ENCODE measurements at regions of chr16 and their contacts with region 1.

Region 1: DNA sequence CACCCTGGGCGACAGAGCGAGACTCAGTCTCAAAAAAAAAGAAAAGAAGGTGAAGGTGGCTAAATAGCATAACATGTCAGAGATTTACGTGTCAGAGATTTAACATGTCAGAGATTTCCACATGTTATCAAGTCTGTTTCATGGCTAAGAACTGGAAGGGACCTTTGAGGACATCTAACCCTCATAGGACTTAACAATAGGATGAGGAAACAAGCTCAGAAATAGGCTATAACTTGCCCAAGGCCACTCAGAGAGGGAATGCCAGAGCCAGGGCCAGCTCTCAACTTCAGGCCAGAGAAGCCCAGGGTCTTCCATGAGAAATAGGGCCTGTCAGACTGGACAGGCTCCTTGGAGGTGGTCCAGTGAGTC is 26.8 kb upstream of the ZNF629 start:
- DNase-seq: peak in 1 of 3 donors; percentile 6
- H3K4me3 ChIP-seq: peak overlapping the region; percentile 13 to 79 (median 61)
- H3K27ac ChIP-seq: peak overlapping the region; percentile 30 to 81
- H3K4me1 ChIP-seq: peaks cover 0 to 18% (median 13%) of the 10 kb centered on the region in 4 experiments
- H3K27me3 ChIP-seq: no peaks in the 10 kb centered on the region

Region 2: GRCh38 chr16:30761427-30761927 is 52.3 kb before region 1 on chr16:
- CTCF ChIA-PET with region 1: interaction called, 10 read pairs
- POLR2A ChIA-PET with region 1: no interaction called
- DNase-seq: peak; percentile 48 to 71 (median 58)
- H3K4me3 ChIP-seq: peak overlapping the region; percentile 86 to 98 (median 93)
- H3K27ac ChIP-seq: peak overlapping the region; percentile 85 to 93
- H3K4me1 ChIP-seq: peaks cover 11 to 53% (median 47%) of the 10 kb centered on the region in 4 experiments
- H3K27me3 ChIP-seq: no peaks in the 10 kb centered on the region

Measured in common myeloid progenitor, CD34-positive (primary cell).